Gastrocnemius medialis (tissue), 4 donors: ENCODE measurements at regions of chr11 and their contacts with region 1.

Region 1: GRCh38 chr11:70481625-70482528 is 83.5 kb downstream of the CTTN start:
- DNase-seq: peak; percentile 86 to 94
- ATAC-seq: peak; percentile 92 to 97
- H3K4me3 ChIP-seq: no peak overlapping the region
- H3K27ac ChIP-seq: peak overlapping the region; percentile 84 to 88 (median 86)
- H3K4me1 ChIP-seq: peaks cover 13 to 18% of the 10 kb centered on the region in 2 donors
- H3K27me3 ChIP-seq: no peaks in the 10 kb centered on the region
- CTCF ChIP-seq: no peak
- POLR2A ChIP-seq: no peak

Region 2: GRCh38 chr11:70467201-70468085 is 14.4 kb before region 1 on chr11:
- in situ Hi-C with region 1: no loop called
- intact Hi-C with region 1: loop called (anchors 1 kb)
- DNase-seq: peak in 1 of 2 donors; percentile 22
- ATAC-seq: peak in 1 of 2 donors; percentile 32
- H3K4me3 ChIP-seq: no peak overlapping the region
- H3K27ac ChIP-seq: no peak overlapping the region
- H3K4me1 ChIP-seq: peaks cover 0 to 9% of the 10 kb centered on the region in 2 donors
- H3K27me3 ChIP-seq: no peaks in the 10 kb centered on the region
- CTCF ChIP-seq: peak; percentile 84 to 96 (median 87)
- POLR2A ChIP-seq: peak in 1 of 2 donors; percentile 3

Region 3: GRCh38 chr11:70608568-70609470 is 126.9 kb after region 1 on chr11:
- in situ Hi-C with region 1: no loop called
- intact Hi-C with region 1: loop called (anchors 1 kb)
- DNase-seq: peak in 1 of 2 donors; percentile 25
- ATAC-seq: peak; percentile 82 to 84
- H3K4me3 ChIP-seq: peak overlapping the region; percentile 14 to 25 (median 20)
- H3K27ac ChIP-seq: peak overlapping the region in 2 of 4 donors; percentile 56 to 70
- H3K4me1 ChIP-seq: peaks cover 17 to 19% of the 10 kb centered on the region in 2 donors
- H3K27me3 ChIP-seq: no peaks in the 10 kb centered on the region
- CTCF ChIP-seq: no peak
- POLR2A ChIP-seq: no peak